Pancreas (tissue), 10 donors: ENCODE measurements at regions of chr7 and their contacts with region 1.

Region 1: GRCh38 chr7:107879400-107880035 is 11.5 kb upstream of the DLD start:
- DNase-seq: peak in 1 of 6 donors; percentile 54
- ATAC-seq: peak; percentile 79 to 92 (median 91)
- H3K4me3 ChIP-seq: no peak overlapping the region
- H3K27ac ChIP-seq: no peak overlapping the region
- H3K4me1 ChIP-seq: no peaks in the 10 kb centered on the region
- H3K27me3 ChIP-seq: no peaks in the 10 kb centered on the region
- CTCF ChIP-seq: peak; percentile 43 to 74 (median 64)

Region 2: DNA sequence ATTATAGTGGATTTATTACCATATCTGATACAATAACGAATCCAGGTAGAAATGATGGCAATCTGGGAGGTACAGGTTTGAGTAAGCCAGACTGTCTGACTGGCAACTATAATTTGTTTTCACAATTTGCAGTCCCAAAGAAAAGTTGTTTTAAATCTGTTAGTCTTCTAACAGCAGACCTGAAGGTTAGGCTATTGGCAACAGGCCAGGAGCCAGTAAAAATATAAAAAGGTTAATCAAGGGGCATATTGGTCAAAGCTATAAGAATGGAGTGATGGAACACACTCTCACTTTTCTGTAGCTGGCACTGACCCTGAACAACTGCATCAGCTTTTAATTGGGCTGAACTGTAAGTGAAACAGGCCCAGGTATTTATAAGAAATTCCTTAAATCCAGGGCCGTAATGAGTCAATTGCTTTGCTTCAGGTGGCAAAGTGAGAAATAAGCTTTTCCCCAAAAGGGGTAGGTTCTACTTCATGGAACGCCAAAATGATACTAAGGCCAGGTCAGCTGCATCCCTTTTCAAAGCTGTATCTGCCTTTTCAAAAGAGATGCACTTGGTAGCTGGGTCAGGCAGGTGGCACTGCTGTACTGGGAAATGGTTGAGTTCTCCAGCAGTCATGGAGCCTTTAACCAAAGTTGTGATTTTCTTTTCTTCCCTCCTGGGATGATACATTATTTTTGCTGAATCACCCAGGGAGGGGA is 416.6 kb before region 1 on chr7:
- intact Hi-C with region 1: loop called in 1 of 3 experiments (anchors 10 kb)
- DNase-seq: peak in 5 of 6 donors; percentile 37 to 60 (median 41)
- ATAC-seq: peak; percentile 88 to 99 (median 98)
- H3K4me3 ChIP-seq: no peak overlapping the region
- H3K27ac ChIP-seq: no peak overlapping the region
- H3K4me1 ChIP-seq: no peaks in the 10 kb centered on the region
- H3K27me3 ChIP-seq: no peaks in the 10 kb centered on the region
- CTCF ChIP-seq: peak in 3 of 4 donors; percentile 40 to 50 (median 46)

Region 3: DNA sequence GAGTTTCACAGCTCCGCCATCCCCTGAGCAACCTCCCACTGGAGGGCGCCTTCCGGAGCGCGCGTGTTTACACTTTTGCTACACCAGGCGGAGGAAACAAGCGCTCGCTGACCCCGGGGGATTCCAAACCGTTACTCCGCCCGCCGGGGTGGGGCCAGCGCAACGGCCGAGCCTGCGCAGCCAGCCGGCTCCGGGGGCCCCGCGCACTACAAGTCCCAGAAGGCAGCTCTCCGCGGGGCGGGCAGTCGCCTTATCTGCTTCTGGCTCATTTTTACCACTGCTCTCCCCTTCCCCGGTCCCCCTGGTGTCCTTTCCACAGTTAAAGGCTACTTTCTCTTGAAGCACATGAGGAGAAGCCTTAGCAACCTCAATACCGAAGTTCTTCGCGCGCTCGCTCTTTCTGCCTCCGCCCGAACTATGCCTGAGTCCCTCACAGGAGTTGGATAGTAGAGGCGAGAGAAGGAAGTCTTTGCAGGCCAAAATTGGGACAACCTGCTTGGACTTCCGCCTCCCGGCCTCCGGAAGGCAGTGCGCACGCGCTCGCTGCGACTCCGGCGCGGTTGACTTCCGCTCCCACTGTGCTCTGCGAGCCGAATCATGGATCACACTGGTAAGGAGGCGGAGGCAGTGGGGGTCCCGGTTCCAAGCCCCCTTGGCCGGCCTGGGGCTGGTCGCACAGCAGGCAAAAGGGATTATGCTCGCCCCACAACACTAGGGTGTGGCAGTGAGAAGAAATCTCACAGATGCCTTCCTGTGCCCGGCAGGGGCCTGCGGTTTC is 135.8 kb before region 1 on chr7 and contains the start of gene CBLL1:
- intact Hi-C with region 1: loop called in 1 of 3 experiments (anchors 5 kb)
- DNase-seq: peak; percentile 95 to 97 (median 97)
- ATAC-seq: peak; percentile 95 to 98 (median 96)
- H3K4me3 ChIP-seq: peak within 1 kb of the TSS; percentile 80 to 92 (median 85)
- H3K27ac ChIP-seq: peak within 1 kb of the TSS; percentile 80 to 96 (median 95)
- H3K4me1 ChIP-seq: peaks cover 11 to 18% (median 11%) of the 10 kb centered on the region in 3 donors
- H3K27me3 ChIP-seq: no peaks in the 10 kb centered on the region
- CTCF ChIP-seq: peak; percentile 40 to 65 (median 60)
- total RNA-seq, gene CBLL1: 9.4 to 15.3 (median 11.1) TPM

Region 4: GRCh38 chr7:107754642-107755041 is 124.9 kb before region 1 on chr7:
- intact Hi-C with region 1: loop called in 1 of 3 experiments (anchors 5 kb)
- DNase-seq: no peak
- ATAC-seq: no peak
- H3K4me3 ChIP-seq: no peak overlapping the region
- H3K27ac ChIP-seq: no peak overlapping the region
- H3K4me1 ChIP-seq: no peaks in the 10 kb centered on the region
- H3K27me3 ChIP-seq: no peaks in the 10 kb centered on the region
- CTCF ChIP-seq: no peak

Region 5: DNA sequence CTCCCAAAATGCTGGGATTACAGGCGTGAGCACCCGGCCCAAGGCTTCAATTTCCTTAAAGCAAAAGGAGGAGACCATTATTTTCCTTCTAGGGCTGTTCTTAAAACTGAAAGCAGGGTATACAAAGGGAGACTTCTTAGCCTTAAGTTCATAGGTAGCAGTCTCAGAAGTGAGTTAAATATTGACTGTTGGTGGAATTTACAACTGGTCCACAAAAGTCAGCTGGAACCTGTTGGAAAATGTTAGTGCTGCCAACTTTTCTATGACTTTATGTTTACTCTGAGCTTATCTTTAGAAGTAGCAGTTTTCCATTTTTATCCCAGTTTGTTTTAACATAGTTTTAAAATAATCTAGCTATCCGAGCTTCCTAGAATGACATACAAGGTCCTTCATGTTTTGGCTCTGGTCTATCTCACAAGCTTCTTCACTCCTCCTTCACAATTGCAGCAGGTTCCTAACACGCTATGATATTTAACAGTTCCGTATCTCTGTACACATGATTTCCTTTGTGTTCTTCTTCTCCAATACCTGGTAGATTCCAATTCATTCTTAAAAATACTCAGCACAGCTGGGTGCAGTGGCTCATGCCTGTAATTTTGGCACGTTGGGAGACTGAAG is 79.8 kb before region 1 on chr7:
- intact Hi-C with region 1: no loop called
- DNase-seq: peak in 2 of 6 donors; percentile 13 to 30
- ATAC-seq: peak; percentile 95 to 98 (median 97)
- H3K4me3 ChIP-seq: no peak overlapping the region
- H3K27ac ChIP-seq: peak overlapping the region in 2 of 4 donors; percentile 6 to 63
- H3K4me1 ChIP-seq: peaks cover 3 to 15% (median 6%) of the 10 kb centered on the region in 3 donors
- H3K27me3 ChIP-seq: no peaks in the 10 kb centered on the region
- CTCF ChIP-seq: no peak